GM12878 (cell line): ENCODE measurements at regions of chr6 and their contacts with region 1.

Region 1: GRCh38 chr6:116542426-116542825 is 3.1 kb downstream of the TRAPPC3L start:
- DNase-seq: no peak
- ATAC-seq: no peak
- H3K4me3 ChIP-seq: no peak overlapping the region
- H3K27ac ChIP-seq: no peak overlapping the region
- H3K4me1 ChIP-seq: no peaks in the 10 kb centered on the region
- H3K27me3 ChIP-seq: peaks cover 0 to 8% of the 10 kb centered on the region in 2 experiments; a peak in 1 of 4 replicates
- CTCF ChIP-seq: no peak
- EP300 ChIP-seq: no peak
- POLR2A ChIP-seq: no peak
- RAD21 ChIP-seq: no peak

Region 2: GRCh38 chr6:116561377-116562018 is 19.1 kb after region 1 on chr6:
- CTCF ChIA-PET with region 1: interaction called, 48 read pairs
- POLR2A ChIA-PET with region 1: no interaction called
- RAD21 ChIA-PET with region 1: interaction called, 7 read pairs
- SMC1A ChIA-PET with region 1: interaction called, 4 read pairs
- in situ Hi-C with region 1: no loop called
- intact Hi-C with region 1: no loop called
- DNase-seq: no peak
- ATAC-seq: peak; percentile 87
- H3K4me3 ChIP-seq: no peak overlapping the region
- H3K27ac ChIP-seq: no peak overlapping the region
- H3K4me1 ChIP-seq: no peaks in the 10 kb centered on the region
- H3K27me3 ChIP-seq: no peaks in the 10 kb centered on the region; a peak in 1 of 4 replicates
- CTCF ChIP-seq: peak; percentile 84 to 93 (median 88)
- EP300 ChIP-seq: no peak
- POLR2A ChIP-seq: no peak
- RAD21 ChIP-seq: peak; percentile 81